Activated CD4-positive, alpha-beta memory T cell treated with anti-CD3 and anti-CD28 coated beads, Interleukin-2, amount 10 ng/mL, durations not matched to agents 7 days and 5 days (primary cell): ENCODE measurements at regions of chr20 and their contacts with region 1.

Region 1: GRCh38 chr20:49534255-49534712 is 33.7 kb downstream of the PTGIS start:
- DNase-seq: peak; percentile 75
- H3K4me3 Mint-ChIP-seq: peak overlapping the region; percentile 42
- H3K27ac Mint-ChIP-seq: peak overlapping the region; percentile 89
- H3K4me1 Mint-ChIP-seq: peaks cover 31% of the 10 kb centered on the region
- H3K27me3 Mint-ChIP-seq: peaks cover 17% of the 10 kb centered on the region

Region 2: GRCh38 chr20:49330544-49331239 is 203.6 kb before region 1 on chr20:
- CTCF ChIA-PET with region 1: interaction called, 30 read pairs
- POLR2A ChIA-PET with region 1: interaction called, 3 read pairs
- DNase-seq: no peak
- H3K4me3 Mint-ChIP-seq: no peak overlapping the region
- H3K27ac Mint-ChIP-seq: no peak overlapping the region
- H3K4me1 Mint-ChIP-seq: peaks cover 2% of the 10 kb centered on the region
- H3K27me3 Mint-ChIP-seq: peaks cover 51% of the 10 kb centered on the region

Region 3: GRCh38 chr20:49338061-49338460 is 196.2 kb before region 1 on chr20:
- CTCF ChIA-PET with region 1: interaction called, 30 read pairs
- POLR2A ChIA-PET with region 1: no interaction called
- DNase-seq: no peak
- H3K4me3 Mint-ChIP-seq: no peak overlapping the region
- H3K27ac Mint-ChIP-seq: no peak overlapping the region
- H3K4me1 Mint-ChIP-seq: no peaks in the 10 kb centered on the region
- H3K27me3 Mint-ChIP-seq: peaks cover 22% of the 10 kb centered on the region

Region 4: DNA sequence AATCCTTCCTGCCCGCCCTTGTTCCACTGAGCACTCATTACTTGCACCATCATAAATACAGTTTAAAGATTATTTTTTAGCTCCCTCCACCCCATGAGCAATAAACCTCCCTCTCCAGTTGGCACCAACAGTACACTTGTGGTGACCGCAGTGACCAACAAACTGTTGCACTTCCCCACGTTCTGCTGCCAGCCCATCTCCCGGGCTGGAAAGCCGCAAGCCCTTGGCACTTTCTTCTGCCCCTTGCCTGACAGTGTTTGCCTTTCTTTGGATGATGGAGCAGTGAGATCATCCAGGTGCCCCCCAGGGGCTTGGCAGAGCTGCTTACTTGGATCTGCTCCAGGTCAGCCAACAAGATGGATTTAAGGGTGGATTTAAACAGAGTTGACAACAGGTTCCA is 73.4 kb before region 1 on chr20:
- CTCF ChIA-PET with region 1: no interaction called
- POLR2A ChIA-PET with region 1: no interaction called
- DNase-seq: no peak
- H3K4me3 Mint-ChIP-seq: no peak overlapping the region
- H3K27ac Mint-ChIP-seq: no peak overlapping the region
- H3K4me1 Mint-ChIP-seq: no peaks in the 10 kb centered on the region
- H3K27me3 Mint-ChIP-seq: peaks cover 35% of the 10 kb centered on the region

Region 5: GRCh38 chr20:49699200-49699992 is 165.1 kb after region 1 on chr20:
- CTCF ChIA-PET with region 1: no interaction called
- POLR2A ChIA-PET with region 1: no interaction called
- DNase-seq: no peak
- H3K4me3 Mint-ChIP-seq: no peak overlapping the region
- H3K27ac Mint-ChIP-seq: no peak overlapping the region
- H3K4me1 Mint-ChIP-seq: peaks cover 55% of the 10 kb centered on the region
- H3K27me3 Mint-ChIP-seq: no peaks in the 10 kb centered on the region